ENCODE measurements at regions of chr4 and their contacts with region 1.

Region 1: GRCh38 chr4:52983563-52984303 is 121.6 kb downstream of the RASL11B start:
- DNase-seq: no peak
- H3K4me3 ChIP-seq: no peak overlapping the region
- H3K27ac ChIP-seq: no peak overlapping the region
- H3K4me1 ChIP-seq: peaks cover 0 to 24% (median 6%) of the 10 kb centered on the region in 4 donors
- H3K27me3 ChIP-seq: no peaks in the 10 kb centered on the region
- CTCF ChIP-seq: peak; percentile 10 to 69 (median 50)
- EP300 ChIP-seq: no peak
- POLR2A ChIP-seq: no peak

Region 2: DNA sequence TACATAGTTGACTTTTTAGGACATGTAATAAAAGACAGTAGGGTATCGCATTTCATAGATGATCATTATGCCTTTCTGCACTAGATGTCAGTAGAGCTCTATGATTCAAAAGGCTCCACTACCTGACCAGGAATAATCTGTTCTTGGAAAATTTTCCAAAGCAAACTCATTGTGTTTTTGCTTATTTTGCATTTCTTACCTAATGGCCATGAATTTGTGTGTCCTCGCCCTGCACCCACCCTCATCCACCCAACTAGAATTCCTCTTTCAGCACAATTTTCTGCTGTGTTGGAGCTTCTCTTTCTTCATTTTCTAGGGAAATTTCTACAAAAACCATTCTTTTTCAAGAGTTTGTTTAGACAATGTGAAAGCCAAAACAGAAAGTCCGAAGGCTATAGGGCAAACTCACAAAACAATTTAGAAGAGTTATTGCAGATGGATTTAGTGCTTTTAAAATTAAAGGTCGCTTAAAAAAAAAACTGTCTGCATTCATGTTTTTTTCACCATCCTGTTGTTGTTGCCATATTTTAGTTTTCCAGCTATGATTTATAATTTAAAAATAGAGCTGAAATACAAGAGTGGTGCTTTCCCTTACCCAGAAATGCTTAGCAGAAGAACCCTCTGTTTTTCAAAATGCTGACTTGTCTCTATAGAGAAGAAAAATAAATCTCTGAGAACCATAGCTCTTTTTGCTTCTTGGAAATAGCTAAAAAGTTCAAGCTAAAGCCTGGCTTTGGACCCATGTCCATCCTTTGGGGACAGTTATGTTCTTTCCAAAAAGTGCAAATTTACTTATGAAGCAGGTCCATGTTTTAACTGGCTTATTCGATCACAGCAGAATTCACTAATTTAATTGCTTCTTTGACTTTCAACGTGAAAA is 748.9 kb before region 1 on chr4:
- intact Hi-C with region 1: loop called (anchors 5 kb)
- DNase-seq: no peak
- H3K4me3 ChIP-seq: no peak overlapping the region
- H3K27ac ChIP-seq: no peak overlapping the region
- H3K4me1 ChIP-seq: no peaks in the 10 kb centered on the region
- H3K27me3 ChIP-seq: no peaks in the 10 kb centered on the region
- CTCF ChIP-seq: peak in 2 of 4 experiments; percentile 18 to 41
- EP300 ChIP-seq: no peak
- POLR2A ChIP-seq: no peak

Region 3: DNA sequence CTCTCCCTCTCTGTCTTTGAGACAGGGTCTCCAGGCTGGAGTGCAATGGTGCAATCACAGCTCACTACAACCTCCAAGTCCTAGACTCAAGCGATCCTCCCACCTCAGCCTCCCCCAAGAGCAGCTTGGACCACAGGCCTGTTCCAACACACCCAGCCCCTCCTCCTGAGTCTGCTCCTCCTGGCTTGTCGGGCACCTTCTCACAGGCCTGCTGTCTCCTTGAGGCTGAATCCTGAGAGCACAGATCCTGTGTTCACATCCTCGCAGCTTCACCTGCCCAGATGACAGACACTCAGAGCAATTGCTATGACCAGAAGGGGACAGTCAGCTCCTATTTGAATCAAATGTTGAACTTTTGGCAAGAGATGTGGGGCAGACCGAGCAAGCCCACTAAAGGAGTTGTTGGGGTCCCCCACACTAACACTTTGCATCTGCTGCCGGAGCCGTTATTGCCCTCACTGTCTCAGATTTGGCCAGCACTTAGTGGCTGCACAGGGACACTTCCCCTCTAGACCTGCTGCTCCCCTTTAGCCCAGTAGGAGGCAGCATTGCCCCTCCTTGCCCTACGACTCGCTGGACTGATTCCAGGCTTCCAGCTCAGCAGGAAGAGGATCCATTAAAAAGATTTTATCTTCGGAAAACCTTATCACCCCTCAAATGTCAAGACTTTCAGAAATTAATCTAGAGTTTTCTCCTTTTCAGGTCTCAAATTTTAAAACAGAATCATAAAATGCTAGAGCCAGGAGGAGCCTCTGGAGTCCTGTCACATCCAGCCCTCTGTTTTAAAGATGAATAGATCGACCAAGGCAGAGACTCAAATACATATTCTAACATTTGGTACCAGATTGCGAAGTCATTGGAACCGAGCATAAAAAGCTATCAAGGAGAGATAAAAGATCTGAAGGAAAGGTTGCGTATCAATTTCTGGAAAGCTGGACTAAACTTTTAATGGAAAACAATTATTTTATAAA is 438.3 kb before region 1 on chr4:
- intact Hi-C with region 1: loop called (anchors 2 kb)
- DNase-seq: peak; percentile 86
- H3K4me3 ChIP-seq: no peak overlapping the region
- H3K27ac ChIP-seq: no peak overlapping the region
- H3K4me1 ChIP-seq: no peaks in the 10 kb centered on the region
- H3K27me3 ChIP-seq: no peaks in the 10 kb centered on the region
- CTCF ChIP-seq: peak; percentile 65 to 92 (median 80)
- EP300 ChIP-seq: no peak
- POLR2A ChIP-seq: no peak

Region 4: DNA sequence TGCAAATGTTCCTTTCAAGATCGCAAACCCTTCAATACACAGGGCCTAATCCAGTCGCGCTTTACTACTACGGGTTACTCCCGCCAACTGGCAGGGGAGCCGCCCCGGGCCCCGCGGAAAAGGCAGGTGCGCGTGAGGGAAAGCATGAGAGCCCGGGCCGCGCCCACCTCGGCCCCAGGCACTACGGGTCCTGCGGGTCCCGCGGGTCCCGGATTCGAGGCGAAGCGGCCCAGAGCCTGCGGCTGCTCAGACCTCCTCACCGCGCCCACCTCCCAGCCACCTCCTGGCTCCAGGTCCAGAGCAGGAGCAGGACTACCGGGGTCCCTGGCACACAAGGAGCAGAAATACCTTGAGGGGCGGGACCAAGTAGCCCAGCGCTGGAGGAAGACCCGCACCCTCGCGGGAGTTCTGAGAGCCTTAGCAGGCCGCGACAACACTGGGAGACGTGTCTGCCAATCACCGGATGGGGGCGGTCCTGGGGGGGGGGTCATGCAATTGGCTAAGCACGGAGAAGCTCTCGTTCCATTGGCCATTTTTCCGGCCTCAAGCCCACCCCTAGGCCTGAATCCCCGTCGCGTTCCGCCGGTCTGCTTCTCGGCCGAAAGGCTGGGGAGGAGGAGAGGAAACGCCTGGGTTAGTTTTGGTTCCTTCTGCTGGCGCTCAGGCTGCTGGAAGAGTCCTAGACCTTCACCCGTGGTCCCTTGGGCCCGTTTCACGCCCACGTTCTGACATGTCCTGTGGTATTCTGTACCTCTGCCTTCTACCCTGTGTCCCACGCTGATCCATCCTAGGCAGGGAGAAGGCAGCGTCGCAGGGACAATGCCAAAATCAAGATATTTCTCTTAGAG is 261.5 kb before region 1 on chr4:
- intact Hi-C with region 1: loop called (anchors 5 kb)
- DNase-seq: peak; percentile 97
- H3K4me3 ChIP-seq: peak overlapping the region; percentile 79 to 88 (median 82)
- H3K27ac ChIP-seq: peak overlapping the region; percentile 88 to 92 (median 90)
- H3K4me1 ChIP-seq: peaks cover 0 to 14% (median 3%) of the 10 kb centered on the region in 4 donors
- H3K27me3 ChIP-seq: no peaks in the 10 kb centered on the region
- CTCF ChIP-seq: no peak
- EP300 ChIP-seq: no peak
- POLR2A ChIP-seq: peak; percentile 64 to 76

Region 5: GRCh38 chr4:52911684-52912294 is 71.9 kb before region 1 on chr4:
- intact Hi-C with region 1: loop called (anchors 5 kb)
- DNase-seq: peak; percentile 76
- H3K4me3 ChIP-seq: no peak overlapping the region
- H3K27ac ChIP-seq: no peak overlapping the region
- H3K4me1 ChIP-seq: peaks cover 0 to 4% (median 0%) of the 10 kb centered on the region in 4 donors
- H3K27me3 ChIP-seq: no peaks in the 10 kb centered on the region
- CTCF ChIP-seq: peak in 3 of 4 experiments; percentile 33 to 50 (median 47)
- EP300 ChIP-seq: no peak
- POLR2A ChIP-seq: no peak

Region 6: DNA sequence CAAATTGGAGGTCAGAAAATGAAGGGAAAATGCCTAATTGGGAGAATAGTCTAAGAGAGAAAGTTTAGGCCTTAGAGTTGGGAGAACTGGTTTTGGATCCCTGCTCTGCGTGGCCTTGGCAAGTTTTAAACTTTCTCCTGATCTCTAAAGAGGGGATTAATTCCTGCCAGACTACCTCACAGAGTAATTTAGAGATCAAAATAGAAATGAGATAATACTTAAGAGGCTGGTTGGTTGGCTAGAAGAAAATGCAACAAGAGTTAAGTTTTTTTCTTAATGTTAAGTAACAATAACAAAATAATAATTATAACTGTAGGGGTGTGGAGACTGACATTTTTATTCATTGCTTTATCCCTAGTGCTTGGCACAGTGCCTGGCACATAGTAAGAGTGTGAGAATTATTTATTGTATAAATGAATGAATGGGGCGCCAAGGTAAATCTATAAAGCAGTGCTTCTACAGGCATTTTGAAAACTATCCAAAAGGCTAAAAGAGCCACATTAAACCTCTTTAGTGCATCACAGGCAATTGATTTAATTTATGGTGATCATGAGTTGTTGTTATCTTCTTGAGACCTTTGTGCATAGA is 38.9 kb after region 1 on chr4:
- intact Hi-C with region 1: no loop called
- DNase-seq: no peak
- H3K4me3 ChIP-seq: no peak overlapping the region
- H3K27ac ChIP-seq: peak overlapping the region in 3 of 4 donors; percentile 18 to 46 (median 26)
- H3K4me1 ChIP-seq: peaks cover 0 to 28% (median 17%) of the 10 kb centered on the region in 4 donors
- H3K27me3 ChIP-seq: no peaks in the 10 kb centered on the region
- CTCF ChIP-seq: no peak
- EP300 ChIP-seq: no peak
- POLR2A ChIP-seq: no peak

Region 7: DNA sequence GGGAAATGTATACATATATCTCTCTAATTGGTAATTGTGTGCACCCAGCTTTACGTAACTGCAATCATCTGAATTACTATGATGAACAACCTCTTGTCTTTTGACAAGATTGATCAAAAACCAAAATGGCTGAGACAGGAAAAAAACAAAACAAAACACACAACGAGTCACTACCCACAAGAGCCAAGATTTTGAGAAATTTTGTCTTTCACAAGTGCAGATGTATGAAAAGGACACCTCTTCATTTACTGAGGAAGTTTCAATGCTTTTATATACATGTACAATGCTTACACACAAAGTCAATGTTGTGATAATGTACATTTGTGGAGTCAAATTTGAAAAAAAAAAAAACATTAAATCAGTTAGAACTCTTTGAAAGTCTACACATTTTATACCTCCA is 157.6 kb after region 1 on chr4:
- intact Hi-C with region 1: no loop called
- DNase-seq: no peak
- H3K4me3 ChIP-seq: no peak overlapping the region
- H3K27ac ChIP-seq: no peak overlapping the region
- H3K4me1 ChIP-seq: no peaks in the 10 kb centered on the region
- H3K27me3 ChIP-seq: no peaks in the 10 kb centered on the region
- CTCF ChIP-seq: no peak
- EP300 ChIP-seq: no peak
- POLR2A ChIP-seq: no peak